Ascending aorta (tissue), 2 donors: ENCODE measurements at regions of chrX and their contacts with region 1.

Region 1: DNA sequence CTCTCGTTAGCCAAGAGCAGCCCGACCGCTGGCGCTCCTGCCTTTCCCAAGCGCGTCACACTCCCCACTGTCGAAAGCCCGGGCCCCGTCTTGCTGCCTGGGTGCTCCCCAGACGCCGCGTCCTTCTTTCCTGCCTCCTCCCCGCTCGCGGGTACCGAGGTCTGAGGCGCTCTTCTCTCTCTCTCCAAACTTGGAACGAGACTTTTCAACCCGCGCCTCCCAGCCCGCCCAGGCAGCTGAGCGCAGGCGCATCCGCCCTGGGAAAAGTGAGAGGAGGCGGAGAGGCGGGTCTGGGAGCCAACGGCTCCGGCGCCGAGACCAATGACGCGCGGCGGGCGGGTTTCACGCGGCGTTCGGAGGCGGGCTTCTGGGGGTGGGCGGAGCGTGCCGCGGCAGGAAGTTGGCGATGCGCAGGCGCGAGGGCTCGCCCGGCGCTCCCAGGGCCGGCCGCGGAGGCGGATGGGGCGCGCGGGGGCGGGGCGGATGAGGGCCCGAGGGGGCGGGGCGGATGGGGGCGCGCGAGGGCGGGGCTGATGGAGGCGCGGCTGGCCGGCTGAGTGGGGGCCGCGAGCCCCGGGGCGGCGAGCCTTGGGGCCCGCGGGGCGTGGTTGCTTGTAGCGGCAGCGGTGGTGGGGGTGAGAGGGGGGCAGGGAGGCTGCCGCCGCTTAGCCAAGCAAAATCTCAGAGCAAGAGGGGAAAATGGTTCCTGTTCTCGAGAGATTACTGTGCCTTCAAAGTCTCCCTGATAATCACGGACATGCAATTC is at the start of gene RBBP7:
- DNase-seq: peak; percentile 70 to 97
- H3K4me3 ChIP-seq: peak within 1 kb of the TSS; percentile 80
- H3K27ac ChIP-seq: peak within 1 kb of the TSS; percentile 96 to 97
- H3K4me1 ChIP-seq: peaks cover 0 to 4% of the 10 kb centered on the region in 2 donors
- H3K27me3 ChIP-seq: no peaks in the 10 kb centered on the region
- CTCF ChIP-seq: no peak
- total RNA-seq, gene RBBP7: 48.7 TPM

Region 2: DNA sequence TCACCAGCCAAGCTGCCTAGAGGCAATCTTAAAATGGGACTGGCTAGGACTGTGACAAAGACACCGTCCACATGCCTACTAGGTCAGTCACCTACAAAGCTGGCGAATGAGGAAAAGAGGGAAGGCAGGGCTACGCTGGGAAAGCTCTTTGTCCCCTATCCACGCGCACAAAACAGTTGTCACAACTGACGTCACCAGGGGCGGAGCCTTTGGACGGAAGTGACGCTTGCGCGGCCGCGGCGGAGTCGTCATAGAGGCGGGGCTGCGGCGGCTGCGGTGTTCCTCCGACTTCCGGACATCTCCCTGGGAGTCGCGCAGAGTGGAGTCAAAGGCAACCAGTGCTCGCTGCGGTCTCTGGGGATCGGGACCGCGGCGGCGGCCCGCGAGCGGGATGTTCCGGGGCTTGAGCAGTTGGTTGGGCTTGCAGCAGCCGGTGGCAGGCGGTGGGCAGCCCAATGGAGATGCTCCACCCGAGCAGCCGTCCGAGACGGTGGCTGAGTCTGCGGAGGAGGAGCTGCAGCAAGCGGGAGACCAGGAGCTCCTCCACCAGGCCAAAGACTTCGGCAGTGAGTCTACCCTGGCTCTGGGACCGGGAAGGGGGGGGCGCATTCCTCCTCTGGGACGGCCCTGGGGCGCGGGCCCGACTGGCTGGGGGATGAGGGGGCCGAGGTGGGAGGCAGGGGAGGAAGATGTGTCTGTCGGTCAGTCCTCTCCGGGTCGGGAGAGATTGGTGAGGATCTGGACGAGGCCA is 150.8 kb before region 1 on chrX and contains the start of gene SYAP1:
- intact Hi-C with region 1: loop called (anchors 1 kb)
- DNase-seq: peak; percentile 94 to 99
- H3K4me3 ChIP-seq: peak within 1 kb of the TSS; percentile 86 to 93
- H3K27ac ChIP-seq: peak within 1 kb of the TSS; percentile 93 to 98
- H3K4me1 ChIP-seq: peaks cover 0 to 16% of the 10 kb centered on the region in 2 donors
- H3K27me3 ChIP-seq: no peaks in the 10 kb centered on the region
- CTCF ChIP-seq: no peak
- total RNA-seq, gene SYAP1: 14.2 TPM

Region 3: DNA sequence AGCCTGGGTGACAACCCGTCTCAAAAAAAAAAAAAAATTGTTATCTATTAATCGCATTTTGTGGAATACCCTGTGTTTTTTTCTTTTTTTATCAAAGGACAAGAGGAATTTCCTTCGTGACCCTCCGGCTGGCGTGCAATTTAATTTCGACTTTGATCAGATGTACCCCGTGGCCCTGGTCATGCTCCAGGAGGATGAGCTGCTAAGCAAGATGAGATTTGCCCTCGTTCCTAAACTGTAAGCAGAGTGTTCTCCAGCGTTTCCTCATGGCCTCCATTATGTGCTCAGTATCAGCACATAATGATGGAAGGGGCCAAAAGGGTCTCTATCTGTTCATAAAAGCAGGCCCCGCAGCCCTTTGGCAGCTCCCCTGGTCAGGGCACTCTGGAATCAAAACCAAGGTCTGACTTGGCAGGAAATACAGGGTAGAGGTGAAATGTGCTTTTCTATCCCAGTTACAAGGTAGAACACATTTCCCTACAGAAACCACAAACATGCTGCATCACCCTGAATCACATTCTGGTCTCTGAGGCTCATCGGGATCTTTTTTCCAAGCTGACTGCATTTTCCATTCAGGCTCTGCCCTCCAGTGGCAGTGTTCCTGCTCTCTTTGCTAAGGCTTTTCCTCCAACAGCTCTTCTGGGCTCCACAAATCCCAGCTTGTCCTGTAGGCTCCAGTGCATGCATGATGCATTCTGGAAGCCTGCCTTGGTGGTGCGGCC is 126.5 kb before region 1 on chrX:
- intact Hi-C with region 1: no loop called
- DNase-seq: no peak
- H3K4me3 ChIP-seq: no peak overlapping the region
- H3K27ac ChIP-seq: no peak overlapping the region
- H3K4me1 ChIP-seq: no peaks in the 10 kb centered on the region
- H3K27me3 ChIP-seq: no peaks in the 10 kb centered on the region
- CTCF ChIP-seq: no peak

Region 4: DNA sequence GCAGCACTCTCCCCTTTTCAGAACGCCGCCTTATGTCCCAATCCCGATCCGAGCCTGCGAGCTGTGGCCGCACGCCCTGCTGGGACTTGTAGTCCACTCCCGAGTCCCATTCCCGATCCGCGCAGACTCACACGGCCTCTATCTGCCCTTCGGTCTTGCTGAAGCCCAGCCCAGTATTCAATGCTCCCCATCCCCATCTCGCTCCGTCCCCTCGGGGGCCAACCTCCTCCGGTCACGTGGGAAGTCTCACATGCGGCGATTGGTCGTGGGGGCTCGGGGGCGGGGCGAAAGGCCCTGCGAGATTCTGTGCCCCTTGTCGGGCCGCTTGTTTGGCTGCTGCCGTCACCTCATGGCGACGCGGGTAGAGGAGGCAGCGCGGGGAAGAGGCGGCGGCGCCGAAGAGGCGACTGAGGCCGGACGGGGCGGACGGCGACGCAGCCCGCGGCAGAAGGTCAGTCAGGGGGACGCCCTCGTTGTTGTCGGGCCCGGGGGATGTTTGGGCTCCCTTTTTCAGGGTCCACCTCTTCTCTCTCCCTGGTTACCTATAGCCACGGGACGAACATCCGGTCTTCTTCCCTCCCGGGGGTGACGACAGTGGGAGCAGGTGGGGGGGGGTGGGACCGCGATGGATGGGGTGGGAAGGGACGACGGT is 84.0 kb before region 1 on chrX and contains the start of gene TXLNG:
- intact Hi-C with region 1: loop called (anchors 1 kb)
- DNase-seq: peak; percentile 99 to 100
- H3K4me3 ChIP-seq: peak within 1 kb of the TSS; percentile 87 to 89
- H3K27ac ChIP-seq: peak within 1 kb of the TSS; percentile 88 to 90
- H3K4me1 ChIP-seq: peaks cover 0 to 11% of the 10 kb centered on the region in 2 donors
- H3K27me3 ChIP-seq: no peaks in the 10 kb centered on the region
- CTCF ChIP-seq: no peak
- total RNA-seq, gene TXLNG: 3.9 TPM

Region 5: GRCh38 chrX:16836371-16836770 is 33.9 kb before region 1 on chrX:
- intact Hi-C with region 1: loop called (anchors 1 kb)
- DNase-seq: no peak
- H3K4me3 ChIP-seq: no peak overlapping the region
- H3K27ac ChIP-seq: no peak overlapping the region
- H3K4me1 ChIP-seq: peaks cover 0 to 12% of the 10 kb centered on the region in 2 donors
- H3K27me3 ChIP-seq: no peaks in the 10 kb centered on the region
- CTCF ChIP-seq: peak in 1 of 3 experiments; percentile 32

Region 6: GRCh38 chrX:17120816-17121215 is 250.5 kb after region 1 on chrX:
- intact Hi-C with region 1: no loop called
- DNase-seq: no peak
- H3K4me3 ChIP-seq: no peak overlapping the region
- H3K27ac ChIP-seq: no peak overlapping the region
- H3K4me1 ChIP-seq: no peaks in the 10 kb centered on the region
- H3K27me3 ChIP-seq: no peaks in the 10 kb centered on the region
- CTCF ChIP-seq: no peak